ENCODE measurements at regions of chr1 and their contacts with region 1.

Region 1: DNA sequence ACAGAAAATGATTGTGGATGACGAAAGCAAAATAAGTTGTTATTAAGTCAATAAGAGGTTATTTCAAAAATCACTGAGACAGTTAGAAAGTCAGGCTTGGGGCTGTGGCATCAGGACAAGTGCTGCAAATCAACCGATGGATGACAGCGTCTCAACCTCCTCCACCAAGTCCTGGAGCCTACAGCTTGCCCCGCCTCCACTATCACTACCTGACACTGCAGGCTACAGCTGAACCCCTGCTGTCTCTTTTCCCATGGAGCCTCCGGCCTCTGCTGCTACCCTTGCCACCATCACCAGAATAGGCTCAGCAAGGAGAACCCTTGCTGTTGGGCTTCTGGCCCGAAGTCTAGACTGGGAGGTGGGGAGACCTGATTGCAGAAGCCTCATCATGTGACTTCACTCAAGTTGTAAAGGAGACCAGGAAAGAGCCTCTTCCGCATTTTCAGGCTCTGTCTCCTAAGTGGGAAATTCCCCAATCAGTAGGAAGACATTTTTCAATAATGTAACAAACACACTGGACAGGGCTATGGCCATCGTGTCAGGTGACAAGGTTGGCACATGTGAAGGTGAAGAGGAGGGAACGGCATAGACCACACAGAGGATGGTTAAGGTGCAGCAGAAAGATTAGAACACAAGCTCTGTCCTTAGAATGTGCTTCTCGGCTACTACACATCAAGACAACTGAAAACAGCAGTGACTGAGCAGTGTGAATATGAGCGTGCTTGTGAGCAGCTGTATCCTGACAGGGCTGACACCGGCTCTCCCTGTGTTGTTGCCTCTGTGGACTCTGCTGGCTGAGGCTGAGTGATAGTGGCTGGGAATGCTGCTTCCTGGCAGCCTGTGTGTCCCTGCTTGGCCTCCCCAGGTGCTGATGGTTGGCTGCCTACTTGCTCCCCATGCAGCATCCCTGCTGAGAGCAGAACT is 660.7 kb downstream of the PTPRU start:
- DNase-seq: no peak
- ATAC-seq: no peak
- H3K4me3 ChIP-seq: no peak overlapping the region
- H3K27ac ChIP-seq: no peak overlapping the region
- H3K4me1 ChIP-seq: peaks cover 16% of the 10 kb centered on the region
- H3K27me3 ChIP-seq: peaks cover 0 to 4% (median 2%) of the 10 kb centered on the region in 3 donors
- CTCF ChIP-seq: no peak

Region 2: GRCh38 chr1:29410476-29410875 is 486.6 kb before region 1 on chr1:
- intact Hi-C with region 1: no loop called
- DNase-seq: no peak
- ATAC-seq: no peak
- H3K4me3 ChIP-seq: no peak overlapping the region
- H3K27ac ChIP-seq: no peak overlapping the region
- H3K4me1 ChIP-seq: no peaks in the 10 kb centered on the region
- H3K27me3 ChIP-seq: peaks cover 0 to 2% (median 0%) of the 10 kb centered on the region in 3 donors
- CTCF ChIP-seq: no peak

Region 3: GRCh38 chr1:30085811-30086770 is 189.0 kb after region 1 on chr1:
- intact Hi-C with region 1: loop called in 1 of 2 experiments (anchors 5 kb)
- DNase-seq: peak; percentile 55 to 64
- ATAC-seq: peak in 3 of 4 donors; percentile 55 to 64 (median 63)
- H3K4me3 ChIP-seq: no peak overlapping the region
- H3K27ac ChIP-seq: no peak overlapping the region
- H3K4me1 ChIP-seq: peaks cover 8% of the 10 kb centered on the region
- H3K27me3 ChIP-seq: peaks cover 0 to 11% (median 0%) of the 10 kb centered on the region in 3 donors
- CTCF ChIP-seq: peak; percentile 47

Region 4: DNA sequence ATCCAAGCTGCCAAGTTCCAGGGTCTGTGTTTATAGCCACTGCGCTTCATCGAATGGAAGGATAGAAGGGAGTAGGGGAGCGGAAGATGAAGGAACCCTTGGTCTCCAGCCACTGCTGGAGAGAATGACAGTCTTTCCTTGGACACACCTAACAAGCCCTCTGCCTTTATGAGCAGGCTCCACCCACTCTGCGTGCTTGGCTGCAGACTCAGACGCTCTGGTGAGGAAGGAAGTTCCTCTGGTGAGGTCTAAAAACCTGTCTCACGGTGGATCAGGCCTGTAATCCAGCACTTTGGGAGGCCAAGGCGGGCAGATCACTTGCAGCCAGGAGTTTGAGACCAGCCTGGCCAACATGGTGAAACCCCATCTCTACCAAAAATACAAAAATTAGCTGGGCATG is 771.0 kb after region 1 on chr1:
- intact Hi-C with region 1: no loop called
- DNase-seq: no peak
- ATAC-seq: no peak
- H3K4me3 ChIP-seq: no peak overlapping the region
- H3K27ac ChIP-seq: no peak overlapping the region
- H3K4me1 ChIP-seq: peaks cover 3% of the 10 kb centered on the region
- H3K27me3 ChIP-seq: peaks cover 0 to 1% (median 0%) of the 10 kb centered on the region in 3 donors
- CTCF ChIP-seq: no peak